ENCODE measurements at regions of chr14 and their contacts with region 1.

Region 1: GRCh38 chr14:87971010-87971409 is 22.0 kb downstream of the GALC start:
- DNase-seq: no peak
- ATAC-seq: peak; percentile 93
- H3K4me3 ChIP-seq: no peak overlapping the region
- H3K27ac ChIP-seq: no peak overlapping the region
- H3K4me1 ChIP-seq: no peaks in the 10 kb centered on the region; the same call in 1 of the 2 replicates
- H3K27me3 ChIP-seq: no peaks in the 10 kb centered on the region
- CTCF ChIP-seq: no peak
- EP300 ChIP-seq: no peak
- POLR2A ChIP-seq: no peak
- RAD21 ChIP-seq: no peak

Region 2: DNA sequence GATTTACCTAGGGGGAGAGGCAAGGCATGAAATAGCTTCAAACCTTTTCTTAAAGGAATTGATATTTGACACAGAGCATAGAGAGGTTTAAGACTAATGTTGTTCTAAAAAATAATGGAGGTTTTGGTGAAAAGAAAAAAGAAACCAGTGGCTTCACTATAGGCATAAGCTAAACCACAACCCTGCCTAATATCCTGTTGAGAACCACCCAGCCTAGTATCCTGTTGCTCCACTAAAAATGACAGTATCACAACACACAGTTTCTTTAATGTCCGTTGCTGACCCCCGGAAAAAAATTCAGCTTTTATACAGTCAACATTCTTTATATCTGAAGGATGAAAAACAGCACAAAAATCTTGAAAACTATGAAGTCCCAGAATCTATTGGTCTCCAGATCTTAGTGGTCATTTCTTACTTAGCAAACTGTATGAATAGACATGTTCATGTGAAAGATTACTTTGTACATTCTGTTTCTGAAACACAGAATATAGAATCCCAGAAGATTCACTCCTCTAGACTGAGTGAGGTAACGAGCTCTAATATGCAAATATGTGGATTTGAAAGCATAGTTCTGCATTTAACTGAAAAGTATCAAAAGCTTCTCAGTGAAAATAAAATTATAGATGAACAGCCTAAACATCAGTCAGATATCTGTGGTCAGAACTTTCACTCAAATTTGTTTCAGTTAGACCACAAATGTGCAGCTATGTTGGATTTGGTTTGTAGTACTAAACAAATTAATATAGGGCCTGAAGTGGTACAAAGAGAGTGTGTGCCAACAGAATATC is 18.5 kb before region 1 on chr14:
- CTCF ChIA-PET with region 1: interaction called, 17 read pairs
- POLR2A ChIA-PET with region 1: no interaction called
- RAD21 ChIA-PET with region 1: no interaction called
- SMC1A ChIA-PET with region 1: interaction called, 13 read pairs
- in situ Hi-C with region 1: no loop called
- intact Hi-C with region 1: no loop called
- DNase-seq: no peak
- ATAC-seq: peak; percentile 88
- H3K4me3 ChIP-seq: no peak overlapping the region
- H3K27ac ChIP-seq: no peak overlapping the region; the same call in 1 of the 2 replicates
- H3K4me1 ChIP-seq: peaks cover 4% of the 10 kb centered on the region
- H3K27me3 ChIP-seq: no peaks in the 10 kb centered on the region
- CTCF ChIP-seq: no peak
- EP300 ChIP-seq: no peak
- POLR2A ChIP-seq: no peak
- RAD21 ChIP-seq: no peak

Region 3: GRCh38 chr14:88044851-88045339 is 73.9 kb after region 1 on chr14:
- CTCF ChIA-PET with region 1: no interaction called
- POLR2A ChIA-PET with region 1: no interaction called
- RAD21 ChIA-PET with region 1: no interaction called
- SMC1A ChIA-PET with region 1: no interaction called
- in situ Hi-C with region 1: no loop called
- intact Hi-C with region 1: no loop called
- DNase-seq: no peak
- ATAC-seq: peak; percentile 86
- H3K4me3 ChIP-seq: no peak overlapping the region
- H3K27ac ChIP-seq: no peak overlapping the region
- H3K4me1 ChIP-seq: no peaks in the 10 kb centered on the region
- H3K27me3 ChIP-seq: peaks cover 0 to 3% of the 10 kb centered on the region in 2 experiments; a peak in 1 of 4 replicates
- CTCF ChIP-seq: no peak
- EP300 ChIP-seq: no peak
- POLR2A ChIP-seq: no peak
- RAD21 ChIP-seq: no peak

Measured in GM12878 (cell line).